Heart right ventricle (tissue), 16 donors: ENCODE measurements at regions of chr1 and their contacts with region 1.

Region 1: DNA sequence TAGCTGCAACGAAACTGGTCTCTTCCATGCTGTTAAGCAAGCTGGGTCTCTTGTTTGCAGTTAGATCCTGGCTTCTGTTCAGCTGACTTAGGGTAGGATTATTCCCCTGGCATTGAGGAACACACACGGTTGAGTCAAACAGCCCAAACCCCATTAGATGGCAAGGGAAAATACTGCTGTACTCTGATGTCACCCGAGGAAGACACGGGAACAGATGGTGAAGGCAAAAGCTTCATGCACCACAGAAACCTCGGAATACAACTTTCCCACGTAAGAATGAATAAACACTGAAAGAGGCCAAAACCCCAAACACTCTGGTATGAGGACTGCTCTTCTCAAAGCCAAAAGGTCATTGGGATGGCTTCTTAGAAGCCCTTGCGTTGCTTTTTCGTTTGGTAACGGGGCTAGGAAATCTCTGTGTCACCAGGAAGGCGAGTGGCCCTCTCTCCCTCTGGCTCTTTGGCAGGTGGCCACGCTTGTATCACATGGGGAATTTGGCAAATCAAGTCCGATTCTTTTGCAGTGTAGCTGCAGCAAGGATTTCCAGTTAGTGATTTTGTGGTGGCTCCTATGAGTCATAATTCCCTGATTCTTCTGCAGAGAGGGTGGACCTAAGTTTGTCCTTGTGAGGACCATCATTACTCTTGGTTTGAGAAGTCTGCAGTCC is 16.7 kb upstream of the LYST start:
- DNase-seq: peak; percentile 79 to 89
- ATAC-seq: peak; percentile 85 to 96 (median 91)
- H3K4me3 ChIP-seq: peak overlapping the region in 6 of 10 donors; percentile 3 to 30 (median 24)
- H3K27ac ChIP-seq: peak overlapping the region in 9 of 10 donors; percentile 35 to 75 (median 67)
- H3K4me1 ChIP-seq: peaks cover 0 to 61% (median 23%) of the 10 kb centered on the region in 9 donors
- H3K27me3 ChIP-seq: no peaks in the 10 kb centered on the region
- CTCF ChIP-seq: no peak

Region 2: DNA sequence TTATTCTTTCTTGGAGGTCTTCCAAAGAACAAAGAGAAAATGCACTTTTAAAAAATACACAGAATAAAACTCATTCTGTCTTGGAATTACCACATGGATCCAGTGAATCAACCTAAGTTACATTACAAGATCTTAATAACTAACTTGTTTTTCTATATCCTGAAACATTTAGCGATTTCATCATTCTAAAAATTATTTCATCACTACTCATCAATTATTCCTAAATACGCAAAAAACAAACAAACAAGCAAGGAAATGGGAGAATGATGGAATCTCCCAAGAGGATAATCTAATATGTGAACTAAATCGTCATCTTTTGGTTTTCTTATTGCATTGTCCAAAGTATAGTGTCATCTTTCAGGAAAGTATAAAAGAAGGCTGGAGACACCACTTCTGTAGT is 195.3 kb before region 1 on chr1:
- intact Hi-C with region 1: no loop called
- DNase-seq: no peak
- ATAC-seq: no peak
- H3K4me3 ChIP-seq: no peak overlapping the region
- H3K27ac ChIP-seq: no peak overlapping the region
- H3K4me1 ChIP-seq: no peaks in the 10 kb centered on the region
- H3K27me3 ChIP-seq: no peaks in the 10 kb centered on the region
- CTCF ChIP-seq: no peak

Region 3: DNA sequence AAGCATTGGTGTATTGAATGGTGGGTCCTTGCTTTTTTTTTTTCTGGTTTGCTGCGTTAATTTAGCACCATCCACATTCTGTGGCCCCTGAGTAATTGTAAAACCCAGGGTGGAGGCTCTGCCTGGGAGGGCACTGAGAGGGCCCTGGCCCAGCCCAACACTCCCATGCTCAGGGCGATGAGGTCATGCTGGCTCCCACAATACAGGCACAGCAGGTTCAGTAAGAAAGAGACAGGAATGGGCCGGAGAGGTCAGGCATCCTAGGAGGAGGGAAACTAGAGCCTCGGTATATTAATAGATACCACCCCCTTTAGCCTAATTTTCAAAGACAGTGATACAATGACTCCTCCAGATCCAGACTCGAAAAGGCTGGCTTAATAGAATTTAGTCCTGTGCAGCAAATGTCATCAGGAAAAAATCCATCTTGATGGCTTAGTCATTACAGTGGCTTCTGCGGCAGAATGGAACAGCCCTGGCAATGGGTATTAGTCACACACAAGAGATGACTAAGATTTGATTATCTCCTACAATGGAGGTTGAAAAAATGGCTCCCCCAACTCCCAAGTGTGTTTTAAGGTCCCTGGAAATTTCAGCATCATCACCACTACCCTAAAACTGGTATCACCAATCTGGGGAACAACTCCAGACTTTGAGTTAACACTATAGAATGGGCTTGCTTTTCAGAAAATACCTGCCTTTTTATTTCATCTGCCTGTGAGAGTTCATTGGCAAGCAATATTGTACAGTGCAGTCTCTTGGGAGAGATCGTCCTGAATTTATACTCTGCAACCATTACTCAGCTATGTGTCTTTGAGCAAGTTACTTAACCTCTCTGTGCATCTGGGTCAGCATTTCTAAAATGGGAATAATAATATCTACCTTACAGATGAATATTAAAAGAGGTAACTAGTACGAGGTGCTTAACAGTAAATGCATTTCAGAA is 27.2 kb after region 1 on chr1:
- intact Hi-C with region 1: loop called in 2 of 10 experiments (anchors 1 to 5 kb)
- DNase-seq: no peak
- ATAC-seq: peak; percentile 23 to 93 (median 57)
- H3K4me3 ChIP-seq: no peak overlapping the region
- H3K27ac ChIP-seq: peak overlapping the region in 3 of 10 donors; percentile 31 to 61 (median 34)
- H3K4me1 ChIP-seq: peaks cover 0 to 24% (median 0%) of the 10 kb centered on the region in 9 donors
- H3K27me3 ChIP-seq: no peaks in the 10 kb centered on the region
- CTCF ChIP-seq: no peak

Region 4: GRCh38 chr1:235917267-235917811 is 33.9 kb after region 1 on chr1:
- intact Hi-C with region 1: loop called in 2 of 10 experiments (anchors 1 to 5 kb)
- DNase-seq: peak in 1 of 2 donors; percentile 78
- ATAC-seq: peak; percentile 88 to 96 (median 95)
- H3K4me3 ChIP-seq: no peak overlapping the region
- H3K27ac ChIP-seq: peak overlapping the region; percentile 3 to 81 (median 44)
- H3K4me1 ChIP-seq: peaks cover 2 to 50% (median 15%) of the 10 kb centered on the region in 9 donors
- H3K27me3 ChIP-seq: no peaks in the 10 kb centered on the region
- CTCF ChIP-seq: no peak

Region 5: DNA sequence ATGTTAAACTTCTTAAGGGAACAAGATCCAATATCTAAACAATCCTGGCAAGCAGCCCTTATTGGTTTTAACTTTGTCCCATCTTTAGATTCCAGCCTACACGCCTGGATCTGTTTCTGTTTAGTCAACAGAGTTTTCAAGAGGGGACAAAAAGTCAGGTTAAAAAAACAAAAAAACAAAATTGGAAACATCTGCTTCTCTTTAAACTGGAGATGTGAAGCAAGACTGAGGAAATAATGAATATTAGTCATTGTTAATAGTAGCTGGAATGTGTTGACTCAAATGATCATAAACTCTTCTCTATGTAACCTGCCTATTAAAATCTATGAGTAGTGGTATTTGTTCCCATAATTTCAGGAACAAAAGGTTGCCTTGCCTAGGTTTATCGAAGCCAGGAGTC is 126.5 kb after region 1 on chr1:
- intact Hi-C with region 1: no loop called
- DNase-seq: no peak
- ATAC-seq: peak in 7 of 8 donors; percentile 29 to 54 (median 44)
- H3K4me3 ChIP-seq: no peak overlapping the region
- H3K27ac ChIP-seq: peak overlapping the region; percentile 50 to 71 (median 66)
- H3K4me1 ChIP-seq: peaks cover 0 to 39% (median 10%) of the 10 kb centered on the region in 9 donors
- H3K27me3 ChIP-seq: no peaks in the 10 kb centered on the region
- CTCF ChIP-seq: no peak

Region 6: GRCh38 chr1:236997882-236998281 is 1114.5 kb after region 1 on chr1:
- intact Hi-C with region 1: no loop called
- DNase-seq: peak; percentile 63 to 69
- ATAC-seq: peak; percentile 82 to 92 (median 90)
- H3K4me3 ChIP-seq: peak overlapping the region in 8 of 10 donors; percentile 9 to 42 (median 34)
- H3K27ac ChIP-seq: peak overlapping the region; percentile 80 to 97 (median 91)
- H3K4me1 ChIP-seq: peaks cover 0 to 22% (median 0%) of the 10 kb centered on the region in 9 donors
- H3K27me3 ChIP-seq: no peaks in the 10 kb centered on the region
- CTCF ChIP-seq: peak in 2 of 9 donors; percentile 29 to 33